ENCODE measurements at regions of chr7 and their contacts with region 1.

Region 1: GRCh38 chr7:134605973-134606923 is 40.4 kb upstream of the BPGM start:
- DNase-seq: peak; percentile 87
- H3K4me3 Mint-ChIP-seq: peak overlapping the region; percentile 59
- H3K27ac Mint-ChIP-seq: no peak overlapping the region
- H3K4me1 Mint-ChIP-seq: peaks cover 3% of the 10 kb centered on the region
- H3K27me3 Mint-ChIP-seq: peaks cover 40% of the 10 kb centered on the region

Region 2: DNA sequence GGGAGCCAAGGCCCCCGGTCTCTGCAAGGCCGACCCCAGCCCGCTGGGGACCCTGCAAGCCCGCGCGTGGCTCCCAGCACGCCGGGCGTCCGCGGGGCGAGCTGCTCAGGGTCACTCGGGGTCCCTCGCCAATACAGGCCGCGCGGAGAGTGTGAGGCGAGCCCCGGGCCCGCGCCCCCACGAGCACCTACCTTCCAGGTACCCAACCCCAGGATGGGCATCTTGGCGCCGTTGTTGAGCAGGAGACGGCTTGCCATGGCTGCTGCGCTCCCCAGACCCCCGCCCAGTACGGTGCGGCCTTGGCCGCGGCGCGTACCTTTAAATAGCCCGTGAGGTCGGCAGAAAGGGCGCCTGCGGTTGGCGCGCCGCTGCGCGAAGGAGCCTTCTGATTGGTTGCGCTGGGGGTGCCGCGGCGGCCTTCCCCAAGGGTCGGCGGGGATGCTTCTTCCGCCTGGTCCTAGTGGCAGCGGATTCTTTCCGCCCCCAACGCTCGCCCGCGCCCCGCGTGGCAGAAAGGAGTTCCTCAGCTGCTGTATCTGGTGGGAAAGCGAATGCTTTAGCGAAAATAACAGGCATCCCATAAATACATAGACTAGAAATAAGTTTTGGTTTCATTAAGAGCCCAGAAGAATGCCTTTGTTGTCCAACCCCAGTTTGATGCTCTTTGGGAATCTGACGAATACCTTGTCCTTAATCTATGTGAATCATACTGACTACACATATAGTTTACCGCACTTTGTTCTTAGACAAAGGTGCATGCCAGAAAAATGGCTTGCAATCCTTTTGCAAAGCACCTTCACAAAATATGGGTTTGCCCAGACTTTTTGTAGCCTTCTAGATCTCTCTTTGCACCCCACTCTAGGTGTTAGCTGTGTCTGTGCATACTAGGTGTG is 147.2 kb before region 1 on chr7 and contains the start of gene AKR1B1:
- intact Hi-C with region 1: loop called (anchors 2 kb)
- DNase-seq: peak; percentile 97
- H3K4me3 Mint-ChIP-seq: peak within 1 kb of the TSS; percentile 90
- H3K27ac Mint-ChIP-seq: peak within 1 kb of the TSS; percentile 83
- H3K4me1 Mint-ChIP-seq: peaks cover 39% of the 10 kb centered on the region
- H3K27me3 Mint-ChIP-seq: no peaks in the 10 kb centered on the region
- total RNA-seq, gene AKR1B1: 107 TPM in 2 replicates

Region 3: GRCh38 chr7:134514663-134515062 is 91.6 kb before region 1 on chr7:
- intact Hi-C with region 1: loop called (anchors 1 kb)
- DNase-seq: peak; percentile 84
- H3K4me3 Mint-ChIP-seq: no peak overlapping the region
- H3K27ac Mint-ChIP-seq: no peak overlapping the region
- H3K4me1 Mint-ChIP-seq: peaks cover 6% of the 10 kb centered on the region
- H3K27me3 Mint-ChIP-seq: peaks cover 20% of the 10 kb centered on the region